ENCODE measurements at regions of chr2 and their contacts with region 1.

Region 1: GRCh38 chr2:11829947-11830707 is 83.7 kb downstream of the LPIN1 start:
- DNase-seq: peak; percentile 74
- H3K4me3 Mint-ChIP-seq: peak overlapping the region; percentile 49
- H3K27ac Mint-ChIP-seq: peak overlapping the region; percentile 72
- H3K4me1 Mint-ChIP-seq: peaks cover 41% of the 10 kb centered on the region
- H3K27me3 Mint-ChIP-seq: peaks cover 32% of the 10 kb centered on the region

Region 2: DNA sequence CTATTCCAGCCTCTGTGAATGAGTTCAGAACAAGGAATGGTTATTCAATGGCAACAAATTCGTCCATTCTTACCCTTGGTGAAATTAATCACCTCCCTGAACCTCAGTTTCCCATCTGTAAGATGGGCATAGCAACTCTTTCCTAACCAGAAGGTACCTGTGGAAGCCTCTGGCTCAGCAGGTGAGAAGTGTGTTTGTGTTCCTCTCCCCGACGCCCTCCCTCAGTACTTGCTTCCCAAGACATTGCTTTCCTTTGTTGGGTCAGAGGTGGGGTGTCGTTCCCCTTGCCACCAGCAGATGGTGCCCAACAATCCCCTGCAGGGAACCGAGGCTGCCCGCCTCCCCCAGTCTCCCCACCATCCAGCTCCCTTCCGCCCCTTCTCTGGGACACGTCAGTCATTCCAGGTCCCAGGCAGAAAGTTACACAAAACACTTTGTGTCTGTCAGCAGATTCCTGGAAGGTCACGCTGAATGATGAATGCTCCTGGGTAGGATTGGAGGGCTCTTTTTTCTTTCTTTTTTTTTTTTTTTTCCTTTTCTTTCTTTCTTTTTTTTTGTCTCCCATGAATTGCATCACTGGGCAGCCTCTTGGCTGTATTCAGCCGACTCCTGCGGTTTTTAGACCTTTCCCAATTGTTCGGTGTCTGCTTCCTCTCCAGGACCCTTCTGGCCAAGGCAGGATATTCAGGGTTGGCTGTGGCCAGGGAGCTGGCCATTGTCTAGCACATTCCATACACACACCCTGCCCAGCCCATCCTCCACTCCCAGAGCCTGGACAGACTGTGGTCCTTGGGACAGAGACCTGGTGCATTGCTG is 33.6 kb after region 1 on chr2:
- CTCF ChIA-PET with region 1: interaction called, 4 read pairs
- POLR2A ChIA-PET with region 1: interaction called, 7 read pairs
- intact Hi-C with region 1: loop called (anchors 1 kb)
- DNase-seq: peak; percentile 76
- H3K4me3 Mint-ChIP-seq: peak overlapping the region; percentile 25
- H3K27ac Mint-ChIP-seq: no peak overlapping the region
- H3K4me1 Mint-ChIP-seq: peaks cover 41% of the 10 kb centered on the region
- H3K27me3 Mint-ChIP-seq: no peaks in the 10 kb centered on the region

Region 3: DNA sequence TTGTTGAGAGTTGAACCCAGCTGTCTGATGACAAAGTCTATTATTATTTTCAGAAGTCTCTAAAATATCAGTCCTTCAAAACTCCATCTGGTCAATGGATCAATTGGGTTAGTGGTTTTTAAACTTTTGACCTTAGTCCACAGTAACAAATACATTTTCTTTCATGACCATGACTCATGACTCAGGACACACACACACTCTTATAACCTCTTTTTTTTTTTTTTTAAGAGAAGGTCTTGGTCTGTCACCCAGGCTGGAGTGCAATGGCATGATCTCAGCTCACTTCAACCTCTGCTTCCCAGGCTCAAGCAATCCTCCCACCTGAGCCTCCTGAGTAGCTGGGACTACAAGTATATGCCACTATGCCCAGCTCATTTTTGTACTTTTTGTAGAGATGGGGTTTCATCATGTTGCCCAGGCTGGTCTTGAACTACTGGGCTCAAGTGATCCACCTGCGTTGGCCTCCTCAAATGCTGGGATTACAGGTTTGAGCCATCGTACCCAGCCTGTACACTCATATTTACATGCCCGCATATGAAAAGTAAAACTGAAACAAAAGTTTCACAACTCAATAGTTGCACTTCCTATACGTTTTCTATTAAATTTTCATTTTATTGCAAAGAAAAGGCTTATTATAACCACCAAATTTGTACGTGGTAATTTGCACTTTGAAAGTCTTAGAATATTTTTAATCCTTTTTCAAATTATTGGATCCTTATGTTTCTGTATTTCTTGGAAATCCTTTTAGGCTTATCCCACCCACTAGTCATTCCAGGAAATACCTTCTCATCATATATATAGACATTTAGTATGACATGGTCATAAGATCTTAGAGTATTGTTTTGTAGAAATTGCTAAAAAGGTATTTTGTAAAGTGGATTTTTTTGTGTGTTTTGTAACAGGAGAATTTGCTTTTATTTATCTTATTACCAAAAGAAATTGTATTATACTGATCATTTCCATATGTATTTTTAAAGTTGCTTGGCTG is 115.3 kb after region 1 on chr2:
- CTCF ChIA-PET with region 1: interaction called, 3 read pairs
- POLR2A ChIA-PET with region 1: no interaction called
- intact Hi-C with region 1: loop called (anchors 1 kb)
- DNase-seq: peak; percentile 54
- H3K4me3 Mint-ChIP-seq: no peak overlapping the region
- H3K27ac Mint-ChIP-seq: no peak overlapping the region
- H3K4me1 Mint-ChIP-seq: peaks cover 12% of the 10 kb centered on the region
- H3K27me3 Mint-ChIP-seq: no peaks in the 10 kb centered on the region

Region 4: GRCh38 chr2:12005886-12006681 is 176.0 kb after region 1 on chr2:
- CTCF ChIA-PET with region 1: interaction called, 4 read pairs
- POLR2A ChIA-PET with region 1: interaction called, 4 read pairs
- intact Hi-C with region 1: loop called (anchors 1 kb)
- DNase-seq: peak; percentile 83
- H3K4me3 Mint-ChIP-seq: peak overlapping the region; percentile 3
- H3K27ac Mint-ChIP-seq: no peak overlapping the region
- H3K4me1 Mint-ChIP-seq: peaks cover 22% of the 10 kb centered on the region
- H3K27me3 Mint-ChIP-seq: peaks cover 62% of the 10 kb centered on the region

Region 5: DNA sequence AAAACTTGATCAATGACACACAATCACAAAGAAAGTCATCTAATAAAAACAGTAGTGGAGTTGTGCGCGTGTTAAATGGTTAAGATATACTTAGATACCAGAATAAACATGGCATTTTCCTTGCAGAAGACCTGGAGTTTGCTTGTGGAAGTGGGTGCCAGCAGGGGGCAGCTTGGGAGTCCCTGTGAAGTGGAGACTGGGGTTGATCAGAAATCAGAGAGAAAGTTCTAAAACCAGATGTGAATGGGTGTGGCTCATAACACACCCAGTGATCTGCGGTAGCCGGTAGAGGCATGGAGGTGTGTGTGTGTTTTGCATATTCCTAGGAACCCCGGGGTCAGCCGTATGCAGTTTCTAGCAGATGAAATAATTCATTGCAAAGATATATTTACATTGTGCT is 586.5 kb after region 1 on chr2:
- CTCF ChIA-PET with region 1: no interaction called
- POLR2A ChIA-PET with region 1: no interaction called
- intact Hi-C with region 1: loop called (anchors 5 kb)
- DNase-seq: peak; percentile 69
- H3K4me3 Mint-ChIP-seq: no peak overlapping the region
- H3K27ac Mint-ChIP-seq: no peak overlapping the region
- H3K4me1 Mint-ChIP-seq: peaks cover 43% of the 10 kb centered on the region
- H3K27me3 Mint-ChIP-seq: no peaks in the 10 kb centered on the region

Region 6: GRCh38 chr2:12819103-12819475 is 989.0 kb after region 1 on chr2:
- CTCF ChIA-PET with region 1: no interaction called
- POLR2A ChIA-PET with region 1: no interaction called
- intact Hi-C with region 1: loop called (anchors 5 kb)
- DNase-seq: no peak
- H3K4me3 Mint-ChIP-seq: no peak overlapping the region
- H3K27ac Mint-ChIP-seq: no peak overlapping the region
- H3K4me1 Mint-ChIP-seq: peaks cover 54% of the 10 kb centered on the region
- H3K27me3 Mint-ChIP-seq: no peaks in the 10 kb centered on the region

Region 7: DNA sequence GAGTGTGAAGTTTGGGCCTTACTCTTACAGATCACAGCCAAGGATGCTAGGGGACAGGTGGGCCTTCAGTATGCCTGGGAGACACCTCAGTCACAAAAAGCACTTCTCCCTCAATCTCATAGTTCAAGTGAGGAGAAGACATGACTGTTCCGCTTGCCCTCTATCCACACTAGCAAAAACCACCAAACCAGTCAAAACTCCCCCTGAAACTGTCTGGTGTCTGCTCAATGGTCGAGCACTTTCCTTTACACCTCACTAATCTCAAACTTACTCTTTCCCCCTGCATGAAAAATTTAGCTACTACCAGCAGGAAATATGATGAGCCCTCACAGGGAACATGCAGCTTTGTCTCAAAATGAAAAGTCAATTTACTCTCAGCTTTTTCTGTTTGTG is 1118.8 kb after region 1 on chr2:
- CTCF ChIA-PET with region 1: no interaction called
- POLR2A ChIA-PET with region 1: no interaction called
- intact Hi-C with region 1: loop called (anchors 5 kb)
- DNase-seq: peak; percentile 46
- H3K4me3 Mint-ChIP-seq: no peak overlapping the region
- H3K27ac Mint-ChIP-seq: no peak overlapping the region
- H3K4me1 Mint-ChIP-seq: peaks cover 9% of the 10 kb centered on the region
- H3K27me3 Mint-ChIP-seq: peaks cover 4% of the 10 kb centered on the region